Sigmoid colon (tissue), 7 donors: ENCODE measurements at regions of chr16 and their contacts with region 1.

Region 1: GRCh38 chr16:81273223-81273950 is 34.9 kb downstream of the BCO1 start:
- DNase-seq: peak; percentile 70
- H3K4me3 ChIP-seq: no peak overlapping the region
- H3K27ac ChIP-seq: peak overlapping the region in 3 of 4 donors; percentile 84 to 87 (median 85)
- H3K4me1 ChIP-seq: peaks cover 0 to 29% (median 21%) of the 10 kb centered on the region in 4 donors
- H3K27me3 ChIP-seq: no peaks in the 10 kb centered on the region
- CTCF ChIP-seq: no peak
- EP300 ChIP-seq: peak in 3 of 4 donors; percentile 40 to 43 (median 42)
- POLR2A ChIP-seq: no peak

Region 2: DNA sequence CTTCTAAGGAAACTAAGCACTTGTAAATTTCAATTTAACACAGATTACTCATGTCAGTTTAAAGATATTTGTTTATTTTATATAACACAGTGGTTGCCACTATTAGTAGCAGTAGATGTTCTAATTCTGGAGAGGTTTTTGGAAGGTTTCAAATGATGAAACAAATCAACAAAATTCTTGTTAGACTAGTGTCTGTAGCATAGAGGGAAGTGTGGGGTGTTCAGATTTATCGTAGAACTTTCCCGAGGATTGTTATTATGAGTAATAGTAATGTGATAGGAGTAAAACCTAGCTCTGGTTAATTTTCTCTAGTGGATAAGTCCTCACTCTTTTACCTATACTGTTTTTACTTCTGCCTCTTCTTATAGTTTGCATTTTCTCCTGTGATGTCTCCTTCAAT is 47.7 kb after region 1 on chr16:
- intact Hi-C with region 1: loop called (anchors 2 kb)
- DNase-seq: no peak
- H3K4me3 ChIP-seq: no peak overlapping the region
- H3K27ac ChIP-seq: peak overlapping the region in 3 of 4 donors; percentile 49 to 72 (median 68)
- H3K4me1 ChIP-seq: peaks cover 0 to 73% (median 57%) of the 10 kb centered on the region in 4 donors
- H3K27me3 ChIP-seq: no peaks in the 10 kb centered on the region
- CTCF ChIP-seq: no peak
- EP300 ChIP-seq: no peak
- POLR2A ChIP-seq: no peak